Panc1 (cell line): ENCODE measurements at regions of chr19 and their contacts with region 1.

Region 1: DNA sequence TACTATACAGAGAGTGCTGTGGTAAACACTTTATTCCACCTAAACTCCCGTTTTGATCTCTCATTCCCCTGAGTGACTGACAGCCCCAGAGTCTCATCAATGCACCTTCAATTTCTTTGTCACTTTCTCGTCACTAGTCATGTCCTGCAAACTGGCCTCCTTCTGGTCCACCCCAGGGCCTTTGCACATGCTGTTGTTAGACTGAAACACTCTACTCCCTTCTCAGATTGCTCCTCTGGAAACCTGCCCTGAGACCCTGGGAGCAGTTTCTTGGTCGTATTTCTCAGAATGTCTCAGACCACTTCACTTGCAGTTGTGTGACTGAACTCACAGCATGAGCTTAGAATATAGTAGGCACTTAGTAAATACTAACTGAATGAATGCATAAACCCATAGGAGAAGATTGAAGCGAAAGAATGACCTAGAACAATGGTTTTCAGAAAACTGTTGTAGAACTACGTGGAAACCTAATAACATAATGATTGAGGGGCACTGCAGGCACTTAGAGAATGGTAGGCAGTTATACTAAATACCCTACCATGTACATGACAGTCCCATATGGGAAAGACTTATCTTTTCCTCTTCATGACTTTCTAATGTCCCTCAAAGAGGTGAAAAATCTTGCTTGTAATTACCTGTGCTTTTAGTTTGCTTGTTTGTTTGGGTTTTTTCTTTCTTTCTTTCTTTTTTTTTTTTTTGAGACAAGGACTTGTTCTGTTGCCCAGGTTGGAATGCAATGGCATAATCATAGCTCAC is 144.8 kb downstream of the IER2 start:
- DNase-seq: no peak
- ATAC-seq: no peak
- H3K4me3 ChIP-seq: no peak overlapping the region
- H3K27ac ChIP-seq: no peak overlapping the region
- H3K4me1 ChIP-seq: no peaks in the 10 kb centered on the region
- H3K27me3 ChIP-seq: no peaks in the 10 kb centered on the region
- CTCF ChIP-seq: no peak

Region 2: GRCh38 chr19:14175351-14175792 is 880.4 kb after region 1 on chr19:
- CTCF ChIA-PET with region 1: no interaction called
- POLR2A ChIA-PET with region 1: interaction called, 14 read pairs
- in situ Hi-C with region 1: no loop called
- intact Hi-C with region 1: no loop called
- DNase-seq: no peak
- ATAC-seq: no peak
- H3K4me3 ChIP-seq: no peak overlapping the region
- H3K27ac ChIP-seq: no peak overlapping the region
- H3K4me1 ChIP-seq: no peaks in the 10 kb centered on the region
- H3K27me3 ChIP-seq: no peaks in the 10 kb centered on the region
- CTCF ChIP-seq: no peak